Ascending aorta (tissue), 2 donors: ENCODE measurements at regions of chr1 and their contacts with region 1.

Region 1: GRCh38 chr1:44405041-44405797 is at the start of gene RNF220:
- DNase-seq: no peak
- H3K4me3 ChIP-seq: peak within 1 kb of the TSS; percentile 46 to 59
- H3K27ac ChIP-seq: no peak within 1 kb of the TSS
- H3K4me1 ChIP-seq: peaks cover 6 to 20% of the 10 kb centered on the region in 2 donors
- H3K27me3 ChIP-seq: peaks cover 31% of the 10 kb centered on the region
- CTCF ChIP-seq: peak in 1 of 3 experiments; percentile 2
- total RNA-seq, gene RNF220: 54.8 TPM

Region 2: DNA sequence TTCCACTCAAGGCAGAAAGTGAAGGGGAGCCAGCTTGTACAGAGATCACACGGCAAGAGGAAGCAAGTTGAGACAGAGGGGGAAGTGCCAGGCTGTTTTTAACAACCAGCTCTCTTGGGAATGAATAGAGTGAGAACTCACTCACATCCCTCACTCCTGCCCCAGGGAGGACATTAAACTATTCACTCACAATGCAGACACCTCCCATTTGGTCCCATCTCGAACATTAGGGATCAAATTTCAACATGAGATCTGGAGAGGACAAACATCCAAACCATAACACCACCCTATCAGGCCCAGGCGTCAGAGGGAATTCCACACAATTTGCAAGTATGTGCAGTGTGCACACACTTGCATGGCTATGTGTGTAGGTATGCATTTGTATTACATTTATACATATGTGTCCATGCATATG is 129.2 kb before region 1 on chr1:
- intact Hi-C with region 1: no loop called
- DNase-seq: no peak
- H3K4me3 ChIP-seq: no peak overlapping the region
- H3K27ac ChIP-seq: no peak overlapping the region
- H3K4me1 ChIP-seq: no peaks in the 10 kb centered on the region
- H3K27me3 ChIP-seq: no peaks in the 10 kb centered on the region
- CTCF ChIP-seq: no peak

Region 3: GRCh38 chr1:44327679-44328491 is 77.3 kb before region 1 on chr1:
- intact Hi-C with region 1: no loop called
- DNase-seq: peak; percentile 61 to 98
- H3K4me3 ChIP-seq: no peak overlapping the region
- H3K27ac ChIP-seq: peak overlapping the region; percentile 58 to 66
- H3K4me1 ChIP-seq: peaks cover 0 to 18% of the 10 kb centered on the region in 2 donors
- H3K27me3 ChIP-seq: no peaks in the 10 kb centered on the region
- CTCF ChIP-seq: no peak

Region 4: DNA sequence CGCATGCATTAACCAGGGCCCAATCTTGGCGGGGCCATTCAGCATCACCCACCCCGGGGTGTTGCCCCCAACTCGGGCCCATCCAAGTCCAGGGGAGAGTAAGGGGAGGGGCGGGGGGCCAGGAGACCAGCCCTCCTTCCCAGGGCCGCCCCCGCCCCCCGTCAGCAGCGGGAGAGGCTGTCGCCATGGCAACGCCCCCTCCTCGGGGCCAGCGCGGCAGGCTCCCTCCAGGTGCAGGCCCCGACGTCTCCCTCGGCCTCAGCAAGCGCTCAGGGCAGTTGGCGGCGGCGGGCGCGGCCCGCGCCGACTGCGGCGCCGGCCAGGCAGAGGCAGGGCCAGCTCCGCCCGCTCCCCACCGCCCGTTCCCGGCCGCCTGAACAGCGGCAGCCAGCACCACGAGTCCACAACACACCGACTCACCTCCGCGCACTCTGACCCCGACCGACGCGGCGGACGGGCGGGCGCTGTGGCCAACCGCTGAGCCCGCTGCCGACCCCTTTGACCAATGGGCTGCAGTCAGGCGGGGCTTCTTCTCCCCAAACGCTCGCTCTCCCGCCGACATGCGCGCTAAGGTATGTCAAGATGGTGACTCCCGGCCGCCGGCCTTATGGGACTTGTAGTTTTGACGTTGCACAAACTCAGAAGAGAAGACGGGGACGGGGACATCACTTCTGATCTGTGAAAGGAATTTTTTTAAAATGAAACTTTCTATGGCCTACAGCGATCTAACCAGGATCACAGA is 50.2 kb before region 1 on chr1 and contains the start of gene ERI3:
- intact Hi-C with region 1: loop called (anchors 5 kb)
- DNase-seq: peak; percentile 96 to 99
- H3K4me3 ChIP-seq: peak within 1 kb of the TSS; percentile 95 to 98
- H3K27ac ChIP-seq: peak within 1 kb of the TSS; percentile 68 to 90
- H3K4me1 ChIP-seq: peaks cover 8 to 14% of the 10 kb centered on the region in 2 donors
- H3K27me3 ChIP-seq: no peaks in the 10 kb centered on the region
- CTCF ChIP-seq: no peak
- total RNA-seq, gene ERI3: 69.3 TPM

Region 5: DNA sequence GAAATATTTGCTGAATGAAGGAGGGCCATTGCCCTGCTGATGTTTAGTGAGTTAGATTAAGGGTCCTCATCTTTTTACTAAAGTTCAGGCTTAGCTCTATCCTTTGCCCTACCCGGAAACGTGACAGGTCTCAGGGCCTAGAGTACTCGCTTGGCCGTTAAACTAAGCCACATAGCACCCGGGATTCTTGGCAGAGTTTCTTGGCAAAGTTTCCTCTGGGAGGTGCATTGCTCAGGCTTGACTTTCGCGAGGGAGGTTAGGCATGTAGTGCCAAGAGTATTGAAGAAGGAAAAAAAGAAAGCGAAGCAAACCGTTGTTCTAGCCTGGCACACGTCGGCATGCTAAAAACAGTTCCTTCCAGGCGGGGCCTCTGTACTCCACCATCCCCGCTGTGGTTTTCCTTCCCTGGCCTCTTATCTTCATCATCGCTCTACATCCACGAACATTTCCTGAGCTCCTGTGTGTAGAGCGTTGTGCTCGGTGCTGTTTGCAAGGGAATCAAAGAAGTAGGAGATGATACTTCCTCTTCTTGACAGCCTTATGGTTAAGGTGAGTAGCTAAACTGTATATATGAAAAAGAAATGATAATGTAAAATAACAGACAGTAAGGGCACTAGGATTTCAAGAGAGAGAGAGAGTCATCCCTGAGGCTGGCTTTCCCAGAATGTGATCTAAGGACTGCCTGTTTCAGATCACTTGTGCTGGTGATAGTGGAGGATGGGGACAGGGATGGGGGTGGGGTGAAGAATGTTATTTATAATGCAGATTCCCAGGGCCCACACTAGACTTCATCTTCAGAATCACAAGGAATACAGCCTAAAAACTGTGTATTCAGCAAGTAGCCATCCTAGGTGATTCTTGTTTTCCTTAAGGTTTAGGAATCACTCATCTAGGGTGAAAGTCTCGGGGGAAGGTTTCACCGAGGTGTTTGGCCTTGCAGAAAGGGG is 18.6 kb after region 1 on chr1:
- intact Hi-C with region 1: loop called (anchors 2 kb)
- DNase-seq: peak in 1 of 2 donors; percentile 90
- H3K4me3 ChIP-seq: peak overlapping the region in 1 of 2 donors; percentile 39
- H3K27ac ChIP-seq: peak overlapping the region; percentile 31 to 45
- H3K4me1 ChIP-seq: peaks cover 5 to 8% of the 10 kb centered on the region in 2 donors
- H3K27me3 ChIP-seq: peaks cover 6% of the 10 kb centered on the region
- CTCF ChIP-seq: peak in 1 of 3 experiments; percentile 3